Activated naive CD4-positive, alpha-beta T cell treated with anti-CD3 and anti-CD28 coated beads for 36 hours (primary cell): ENCODE measurements at regions of chr14 and their contacts with region 1.

Region 1: DNA sequence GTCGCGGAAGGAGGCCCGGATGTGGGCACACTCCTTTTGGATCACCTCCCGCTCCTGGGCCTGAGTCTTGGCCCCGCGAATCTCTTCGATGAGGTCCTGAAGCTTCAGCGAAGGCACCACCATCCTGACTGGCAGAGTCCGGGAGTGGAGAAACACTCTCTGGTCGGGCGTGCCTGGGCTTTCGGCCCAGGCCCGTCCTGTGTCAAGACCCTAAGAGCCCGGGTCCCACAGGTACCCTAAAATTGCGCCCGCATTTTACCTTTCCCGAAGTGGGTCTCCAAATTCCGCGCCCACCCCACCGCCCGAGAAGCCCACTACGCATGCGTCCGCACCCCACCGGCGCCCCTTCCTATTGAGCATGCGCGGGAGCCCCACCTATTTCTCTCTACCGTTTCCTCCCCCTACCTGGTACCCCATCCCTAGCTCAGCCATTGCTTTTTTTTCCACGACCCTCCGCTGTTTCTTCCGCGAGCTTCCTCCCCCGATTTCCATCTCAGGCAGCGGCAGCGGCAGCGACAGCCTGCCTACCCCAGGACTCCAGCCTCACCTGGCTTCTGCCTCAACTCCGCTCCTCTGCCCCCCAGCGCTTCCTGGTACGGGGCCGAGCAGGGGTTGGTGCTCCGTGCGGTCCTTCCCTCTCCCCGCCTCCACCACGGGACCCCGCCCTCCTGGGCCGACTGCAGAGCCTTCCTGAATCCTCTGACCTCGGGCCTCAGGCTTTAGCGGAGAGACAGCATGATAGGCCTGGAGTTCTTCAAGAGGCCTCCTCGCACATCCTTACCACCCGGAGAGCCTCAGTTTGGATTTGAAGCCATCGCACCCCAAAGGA is at the start of gene AP1G2:
- DNase-seq: peak; percentile 96
- H3K4me3 Mint-ChIP-seq: peak within 1 kb of the TSS; percentile 100
- H3K27ac Mint-ChIP-seq: peak within 1 kb of the TSS; percentile 97
- H3K4me1 Mint-ChIP-seq: peaks cover 26% of the 10 kb centered on the region
- H3K27me3 Mint-ChIP-seq: no peaks in the 10 kb centered on the region
- total RNA-seq, gene AP1G2: 205 to 216 TPM

Region 2: DNA sequence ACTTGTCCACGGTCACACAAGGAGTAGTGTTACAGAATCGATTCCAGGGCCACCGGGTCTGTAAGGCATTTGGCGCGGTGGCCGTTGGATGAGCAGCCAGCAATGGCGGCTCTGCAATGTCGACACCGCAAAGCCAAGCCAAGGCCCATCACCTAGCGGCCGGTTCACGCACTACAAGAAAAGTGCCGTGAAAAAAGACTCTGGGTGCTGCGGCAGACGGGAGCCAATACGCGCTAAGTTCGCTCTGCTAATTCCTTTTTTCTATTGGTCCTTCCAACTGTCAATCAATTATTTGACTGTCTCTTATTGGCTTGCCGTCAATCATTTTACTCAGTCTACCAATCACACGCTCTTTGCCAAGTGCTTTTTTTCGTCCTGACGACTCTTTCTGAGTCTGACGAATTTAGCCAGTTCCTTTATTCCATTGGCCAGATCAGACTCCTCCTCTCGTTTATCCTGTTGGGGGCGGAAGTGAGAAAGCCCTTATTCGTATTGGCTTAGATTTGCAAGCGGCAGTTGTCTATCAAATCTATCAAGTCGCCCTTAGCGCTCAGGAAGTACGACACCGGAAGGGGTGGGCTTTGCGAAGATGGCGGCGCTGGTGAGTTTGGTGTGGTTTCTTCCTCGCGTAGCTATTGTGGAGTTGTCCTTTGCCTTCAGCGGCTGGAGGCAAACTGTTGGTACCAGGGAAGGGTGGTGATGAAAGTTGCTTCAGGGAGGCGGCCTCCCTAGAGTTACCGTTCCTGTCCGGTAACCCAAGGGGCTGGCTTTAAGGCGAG is 98.1 kb before region 1 on chr14 and contains the start of gene NGDN:
- CTCF ChIA-PET with region 1: interaction called, 209 read pairs
- intact Hi-C with region 1: loop called (anchors 2 kb)
- DNase-seq: peak; percentile 96
- H3K4me3 Mint-ChIP-seq: no peak within 1 kb of the TSS
- H3K27ac Mint-ChIP-seq: no peak within 1 kb of the TSS
- H3K4me1 Mint-ChIP-seq: peaks cover 11% of the 10 kb centered on the region
- H3K27me3 Mint-ChIP-seq: no peaks in the 10 kb centered on the region
- total RNA-seq, gene NGDN: 38.9 to 40.8 TPM

Region 3: DNA sequence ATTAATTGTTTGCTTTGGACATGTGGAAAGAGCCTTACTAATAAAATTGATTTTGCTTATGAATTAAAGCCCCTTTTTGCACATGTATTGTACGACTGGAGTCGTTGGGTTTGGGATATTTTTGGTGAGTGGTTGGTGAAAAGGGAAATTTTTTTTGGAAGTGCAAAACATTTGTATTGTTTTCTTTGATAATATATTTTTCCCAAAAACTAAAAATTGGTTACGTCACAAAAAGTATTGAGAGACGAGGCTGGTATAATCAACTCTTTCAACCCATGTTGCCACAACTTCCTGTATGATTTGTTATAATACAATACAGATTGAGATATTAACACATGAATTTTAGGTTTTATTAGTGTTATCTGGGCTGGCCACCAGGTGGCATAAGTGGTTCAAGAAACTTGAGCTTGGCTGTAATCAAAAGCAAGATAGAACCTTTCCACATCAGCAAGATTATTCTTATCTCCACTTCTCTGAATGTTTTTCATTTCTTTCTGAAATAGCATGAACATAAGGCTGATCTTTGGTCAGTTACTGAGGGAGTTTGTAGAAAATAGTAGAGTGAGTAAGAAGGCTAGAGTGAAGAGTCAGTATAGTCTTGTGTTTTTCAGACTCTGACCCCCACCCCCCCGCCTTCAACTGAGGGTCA is 89.2 kb before region 1 on chr14:
- CTCF ChIA-PET with region 1: interaction called, 209 read pairs
- intact Hi-C with region 1: loop called (anchors 1 kb)
- DNase-seq: peak; percentile 80
- H3K4me3 Mint-ChIP-seq: no peak overlapping the region
- H3K27ac Mint-ChIP-seq: no peak overlapping the region
- H3K4me1 Mint-ChIP-seq: peaks cover 7% of the 10 kb centered on the region
- H3K27me3 Mint-ChIP-seq: no peaks in the 10 kb centered on the region

Region 4: DNA sequence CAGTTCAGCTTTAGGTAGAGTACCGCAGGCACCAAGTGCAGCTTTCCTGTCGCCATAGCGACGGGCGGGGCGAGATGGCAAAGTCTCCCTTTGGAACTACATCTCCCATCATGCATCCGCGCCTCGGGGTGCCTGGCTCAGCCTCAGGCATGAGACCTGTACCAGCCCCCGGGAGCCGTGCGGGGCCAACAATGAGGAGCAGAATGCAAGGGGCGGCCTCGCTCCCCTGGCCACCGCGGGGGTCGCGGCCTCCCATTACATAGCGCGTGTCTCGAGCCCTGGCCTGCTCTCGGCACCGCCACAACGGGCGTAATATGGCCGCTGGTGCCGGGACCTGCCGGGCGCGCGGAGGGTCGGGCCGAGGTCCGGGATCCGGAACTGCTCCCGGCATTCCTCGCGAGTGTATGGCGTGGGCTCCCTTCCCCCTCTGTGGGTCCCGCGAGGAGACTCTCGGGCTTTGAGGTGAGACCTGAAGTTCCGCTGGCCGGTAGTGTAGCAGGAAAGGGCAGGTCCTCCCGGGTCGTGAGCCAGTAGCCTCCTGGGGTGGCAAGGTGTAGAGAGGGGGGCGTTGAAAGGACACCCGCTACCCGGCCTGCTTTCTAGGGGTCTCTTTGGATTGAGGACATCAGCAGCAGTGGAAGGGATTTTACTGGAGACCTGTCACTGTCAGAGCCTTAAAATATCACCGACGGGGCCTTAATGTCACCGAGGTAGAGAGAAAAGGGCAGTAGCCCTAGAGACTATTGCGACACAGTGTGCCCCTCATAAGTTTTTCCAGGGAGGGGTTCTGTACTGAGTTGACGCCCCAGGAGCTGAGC is 11.3 kb before region 1 on chr14 and contains the start of gene THTPA:
- CTCF ChIA-PET with region 1: interaction called, 22 read pairs
- intact Hi-C with region 1: loop called (anchors 1 kb)
- DNase-seq: peak; percentile 96
- H3K4me3 Mint-ChIP-seq: peak within 1 kb of the TSS; percentile 95
- H3K27ac Mint-ChIP-seq: peak within 1 kb of the TSS; percentile 94
- H3K4me1 Mint-ChIP-seq: peaks cover 38% of the 10 kb centered on the region
- H3K27me3 Mint-ChIP-seq: no peaks in the 10 kb centered on the region
- total RNA-seq, gene THTPA: 6.2 to 6.6 TPM

Region 5: GRCh38 chr14:23861666-23862065 is 294.3 kb after region 1 on chr14:
- CTCF ChIA-PET with region 1: no interaction called
- intact Hi-C with region 1: no loop called
- DNase-seq: no peak
- H3K4me3 Mint-ChIP-seq: no peak overlapping the region
- H3K27ac Mint-ChIP-seq: no peak overlapping the region
- H3K4me1 Mint-ChIP-seq: no peaks in the 10 kb centered on the region
- H3K27me3 Mint-ChIP-seq: peaks cover 4% of the 10 kb centered on the region

Region 6: DNA sequence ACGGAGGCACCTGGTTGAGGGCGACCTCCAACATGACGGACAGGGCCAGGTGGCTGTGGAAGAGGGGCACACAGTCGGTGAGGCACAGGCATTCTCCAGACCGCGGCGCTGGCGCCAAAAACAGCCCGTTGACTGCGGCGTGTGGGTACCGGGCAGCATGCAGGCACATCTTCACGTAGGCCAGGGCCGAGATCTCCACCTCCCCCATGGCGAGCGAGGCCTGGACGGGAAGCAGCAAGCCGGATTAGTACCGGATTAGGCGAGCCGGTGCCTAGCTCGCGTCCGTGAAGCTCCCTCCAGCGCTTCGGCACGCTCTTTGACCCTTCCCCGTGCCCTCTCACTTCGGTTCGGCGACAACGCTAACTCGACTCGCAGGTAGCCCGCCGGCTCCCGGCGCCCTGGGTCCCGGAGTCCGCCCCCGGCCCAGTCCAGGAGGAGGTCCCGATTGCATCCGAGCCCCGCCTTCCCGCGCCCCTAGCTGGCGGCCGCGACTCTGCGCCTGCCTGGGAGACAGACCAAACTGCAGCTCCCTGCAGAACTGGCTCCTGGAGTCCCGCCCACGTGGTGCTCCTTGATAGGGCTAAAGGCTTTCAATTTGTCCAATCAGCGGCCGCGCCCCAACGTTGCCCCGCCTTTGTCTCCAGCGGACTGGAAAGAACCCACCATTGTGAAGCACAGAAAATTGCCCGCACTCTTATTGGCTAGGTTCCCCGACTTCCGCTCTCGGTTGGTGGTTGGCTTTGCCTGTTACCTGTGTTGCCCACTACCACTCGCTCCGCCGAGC is 573.9 kb after region 1 on chr14 and contains the start of gene EMC9:
- CTCF ChIA-PET with region 1: no interaction called
- intact Hi-C with region 1: loop called (anchors 2 kb)
- DNase-seq: peak; percentile 100
- H3K4me3 Mint-ChIP-seq: peak within 1 kb of the TSS; percentile 99
- H3K27ac Mint-ChIP-seq: peak within 1 kb of the TSS; percentile 93
- H3K4me1 Mint-ChIP-seq: peaks cover 73% of the 10 kb centered on the region
- H3K27me3 Mint-ChIP-seq: no peaks in the 10 kb centered on the region
- total RNA-seq, gene EMC9: 38.4 to 38.9 TPM